ENCODE measurements at regions of chr10 and their contacts with region 1.

Region 1: DNA sequence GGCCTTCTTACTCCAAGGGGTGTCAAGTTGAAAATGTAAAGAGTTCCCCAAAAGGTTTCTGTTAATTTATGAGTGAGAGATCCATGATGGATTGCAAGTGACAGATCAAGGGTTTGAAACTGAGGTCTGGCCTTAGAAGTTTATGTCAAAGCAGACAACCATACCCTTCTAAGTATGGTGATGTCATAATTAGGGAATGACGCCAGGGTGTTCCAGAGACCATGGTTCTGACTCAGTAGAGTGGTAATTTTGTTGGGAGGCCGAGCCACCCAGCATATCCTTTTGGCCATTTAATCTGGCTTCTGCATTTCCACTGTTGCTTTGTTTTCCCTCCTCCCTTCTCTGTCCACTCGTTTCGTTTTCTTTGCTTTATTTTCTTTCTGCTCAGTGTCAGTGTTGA is 2.7 kb downstream of the TRUB1 start:
- DNase-seq: no peak
- ATAC-seq: no peak
- H3K4me3 ChIP-seq: no peak overlapping the region
- H3K27ac ChIP-seq: no peak overlapping the region
- H3K4me1 ChIP-seq: peaks cover 3% of the 10 kb centered on the region
- H3K27me3 ChIP-seq: no peaks in the 10 kb centered on the region

Region 2: GRCh38 chr10:114131094-114131493 is 809.6 kb before region 1 on chr10:
- intact Hi-C with region 1: loop called in 1 of 4 experiments (anchors 10 kb)
- DNase-seq: no peak
- ATAC-seq: no peak
- H3K4me3 ChIP-seq: no peak overlapping the region
- H3K27ac ChIP-seq: no peak overlapping the region
- H3K4me1 ChIP-seq: no peaks in the 10 kb centered on the region
- H3K27me3 ChIP-seq: no peaks in the 10 kb centered on the region

Region 3: GRCh38 chr10:115049957-115050356 is 109.2 kb after region 1 on chr10:
- intact Hi-C with region 1: no loop called
- DNase-seq: no peak
- ATAC-seq: no peak
- H3K4me3 ChIP-seq: no peak overlapping the region
- H3K27ac ChIP-seq: no peak overlapping the region
- H3K4me1 ChIP-seq: peaks cover 2% of the 10 kb centered on the region
- H3K27me3 ChIP-seq: no peaks in the 10 kb centered on the region

Region 4: GRCh38 chr10:115514895-115515294 is 574.2 kb after region 1 on chr10:
- intact Hi-C with region 1: no loop called
- DNase-seq: no peak
- ATAC-seq: no peak
- H3K4me3 ChIP-seq: no peak overlapping the region
- H3K27ac ChIP-seq: no peak overlapping the region
- H3K4me1 ChIP-seq: no peaks in the 10 kb centered on the region
- H3K27me3 ChIP-seq: no peaks in the 10 kb centered on the region